Panc1 (cell line): ENCODE measurements at regions of chr3 and their contacts with region 1.

Region 1: GRCh38 chr3:120245386-120245785 is 39.6 kb downstream of the GPR156 start:
- DNase-seq: no peak
- ATAC-seq: no peak
- H3K4me3 ChIP-seq: no peak overlapping the region
- H3K27ac ChIP-seq: no peak overlapping the region
- H3K4me1 ChIP-seq: no peaks in the 10 kb centered on the region
- H3K27me3 ChIP-seq: peaks cover 2% of the 10 kb centered on the region
- CTCF ChIP-seq: no peak

Region 2: GRCh38 chr3:120558771-120559241 is 313.4 kb after region 1 on chr3:
- CTCF ChIA-PET with region 1: interaction called, 16 read pairs
- POLR2A ChIA-PET with region 1: no interaction called
- in situ Hi-C with region 1: no loop called
- intact Hi-C with region 1: loop called (anchors 2 kb)
- DNase-seq: no peak
- ATAC-seq: peak; percentile 83
- H3K4me3 ChIP-seq: peak overlapping the region; percentile 51 to 76
- H3K27ac ChIP-seq: peak overlapping the region; percentile 17; the same call in 1 of the 2 replicates
- H3K4me1 ChIP-seq: peaks cover 14% of the 10 kb centered on the region
- H3K27me3 ChIP-seq: peaks cover 2% of the 10 kb centered on the region; the same call in 1 of the 2 replicates
- CTCF ChIP-seq: peak; percentile 99

Region 3: DNA sequence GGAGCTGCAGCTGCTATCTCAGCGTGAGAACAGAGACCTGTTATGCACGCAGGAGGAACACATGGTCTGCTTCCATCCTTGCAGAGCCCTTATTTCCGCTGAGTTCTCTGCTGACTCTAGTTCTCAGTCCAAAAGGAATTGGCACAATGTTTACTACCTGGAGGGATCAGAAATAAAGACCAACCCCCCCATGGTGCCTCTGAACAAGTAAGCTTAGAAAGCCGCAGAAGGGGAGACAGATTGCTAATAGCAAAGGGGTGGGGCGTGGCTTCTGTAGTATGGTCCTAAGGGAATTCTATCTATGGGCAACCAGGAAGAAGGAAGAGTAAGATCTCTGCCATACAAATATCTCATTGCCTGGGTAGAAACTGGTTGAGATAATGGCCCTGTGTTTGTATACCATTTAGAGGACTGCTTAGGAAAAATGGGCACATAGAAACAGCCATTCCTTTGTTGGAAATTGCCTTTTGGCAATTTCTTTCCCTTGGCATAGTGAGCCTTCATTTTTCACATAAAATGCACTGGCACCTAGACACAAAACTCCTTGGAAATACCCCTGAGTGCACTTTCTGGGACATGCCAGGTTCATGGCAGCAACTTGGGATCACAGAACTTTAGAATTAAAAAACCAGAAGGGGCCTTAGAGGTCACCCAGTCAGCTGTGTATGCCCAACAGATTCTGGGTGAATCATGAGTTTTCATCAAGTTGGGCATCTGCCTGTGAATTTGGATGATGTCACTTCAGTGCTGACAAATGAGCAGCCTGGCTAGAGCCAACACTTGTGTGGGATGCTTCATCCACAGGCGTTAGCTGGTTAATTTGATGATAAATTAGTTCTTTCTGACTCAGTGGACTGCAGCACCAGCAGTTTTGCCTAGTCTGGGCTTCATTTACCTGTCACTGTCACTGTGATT is 605.3 kb after region 1 on chr3:
- CTCF ChIA-PET with region 1: interaction called, 10 read pairs
- POLR2A ChIA-PET with region 1: no interaction called
- in situ Hi-C with region 1: no loop called
- intact Hi-C with region 1: no loop called
- DNase-seq: no peak
- ATAC-seq: no peak
- H3K4me3 ChIP-seq: no peak overlapping the region
- H3K27ac ChIP-seq: no peak overlapping the region
- H3K4me1 ChIP-seq: no peaks in the 10 kb centered on the region
- H3K27me3 ChIP-seq: peaks cover 4% of the 10 kb centered on the region; the same call in 1 of the 2 replicates
- CTCF ChIP-seq: no peak